Activated CD8-positive, alpha-beta T cell treated with anti-CD3 and anti-CD28 coated beads for 36 hours (primary cell): ENCODE measurements at regions of chr17 and their contacts with region 1.

Region 1: DNA sequence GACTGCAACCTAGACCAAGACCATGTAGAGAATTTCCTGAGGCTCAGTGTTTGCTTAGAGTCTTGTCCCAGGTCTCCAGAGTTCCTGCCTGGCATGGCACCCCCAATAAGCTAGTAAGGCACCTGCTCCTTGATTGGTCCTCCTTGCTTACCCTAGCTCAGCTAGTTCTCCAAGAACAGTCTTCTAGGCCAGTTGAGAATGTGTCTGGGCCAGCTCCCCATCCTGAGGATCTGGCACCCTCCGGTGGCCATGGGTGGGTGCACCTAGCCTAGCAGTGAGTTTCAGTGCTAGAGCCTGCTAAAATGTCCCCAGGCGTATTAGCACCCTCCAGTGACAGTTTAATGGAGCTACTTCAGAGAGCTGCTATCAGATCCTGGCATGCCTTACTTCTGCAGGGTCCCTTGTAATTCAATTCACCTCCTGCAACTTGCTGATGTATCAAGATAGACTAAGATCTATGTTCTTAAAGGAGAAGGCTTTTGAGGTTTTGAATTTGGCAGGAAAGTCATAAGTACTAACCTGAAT is 44.4 kb upstream of the MED13 start:
- DNase-seq: peak; percentile 80
- ATAC-seq: peak; percentile 100
- H3K4me3 Mint-ChIP-seq: no peak overlapping the region
- H3K27ac Mint-ChIP-seq: no peak overlapping the region
- H3K4me1 Mint-ChIP-seq: no peaks in the 10 kb centered on the region
- H3K27me3 Mint-ChIP-seq: no peaks in the 10 kb centered on the region
- CTCF ChIP-seq: peak; percentile 72

Region 2: GRCh38 chr17:61635913-61636432 is 473.5 kb before region 1 on chr17:
- CTCF ChIA-PET with region 1: interaction called, 18 read pairs
- POLR2A ChIA-PET with region 1: no interaction called
- intact Hi-C with region 1: no loop called
- DNase-seq: peak; percentile 76
- ATAC-seq: no peak
- H3K4me3 Mint-ChIP-seq: no peak overlapping the region
- H3K27ac Mint-ChIP-seq: no peak overlapping the region
- H3K4me1 Mint-ChIP-seq: no peaks in the 10 kb centered on the region
- H3K27me3 Mint-ChIP-seq: peaks cover 41% of the 10 kb centered on the region
- CTCF ChIP-seq: peak; percentile 77

Region 3: GRCh38 chr17:62052757-62053338 is 56.6 kb before region 1 on chr17:
- CTCF ChIA-PET with region 1: interaction called, 10 read pairs
- POLR2A ChIA-PET with region 1: no interaction called
- intact Hi-C with region 1: no loop called
- DNase-seq: no peak
- ATAC-seq: no peak
- H3K4me3 Mint-ChIP-seq: no peak overlapping the region
- H3K27ac Mint-ChIP-seq: peak overlapping the region; percentile 23
- H3K4me1 Mint-ChIP-seq: peaks cover 46% of the 10 kb centered on the region
- H3K27me3 Mint-ChIP-seq: no peaks in the 10 kb centered on the region
- CTCF ChIP-seq: no peak

Region 4: GRCh38 chr17:62065598-62066468 is 43.6 kb before region 1 on chr17:
- CTCF ChIA-PET with region 1: interaction called, 18 read pairs
- POLR2A ChIA-PET with region 1: no interaction called
- intact Hi-C with region 1: no loop called
- DNase-seq: peak; percentile 99
- ATAC-seq: peak; percentile 96
- H3K4me3 Mint-ChIP-seq: peak overlapping the region; percentile 93
- H3K27ac Mint-ChIP-seq: peak overlapping the region; percentile 98
- H3K4me1 Mint-ChIP-seq: peaks cover 21% of the 10 kb centered on the region
- H3K27me3 Mint-ChIP-seq: no peaks in the 10 kb centered on the region
- CTCF ChIP-seq: peak; percentile 85

Region 5: DNA sequence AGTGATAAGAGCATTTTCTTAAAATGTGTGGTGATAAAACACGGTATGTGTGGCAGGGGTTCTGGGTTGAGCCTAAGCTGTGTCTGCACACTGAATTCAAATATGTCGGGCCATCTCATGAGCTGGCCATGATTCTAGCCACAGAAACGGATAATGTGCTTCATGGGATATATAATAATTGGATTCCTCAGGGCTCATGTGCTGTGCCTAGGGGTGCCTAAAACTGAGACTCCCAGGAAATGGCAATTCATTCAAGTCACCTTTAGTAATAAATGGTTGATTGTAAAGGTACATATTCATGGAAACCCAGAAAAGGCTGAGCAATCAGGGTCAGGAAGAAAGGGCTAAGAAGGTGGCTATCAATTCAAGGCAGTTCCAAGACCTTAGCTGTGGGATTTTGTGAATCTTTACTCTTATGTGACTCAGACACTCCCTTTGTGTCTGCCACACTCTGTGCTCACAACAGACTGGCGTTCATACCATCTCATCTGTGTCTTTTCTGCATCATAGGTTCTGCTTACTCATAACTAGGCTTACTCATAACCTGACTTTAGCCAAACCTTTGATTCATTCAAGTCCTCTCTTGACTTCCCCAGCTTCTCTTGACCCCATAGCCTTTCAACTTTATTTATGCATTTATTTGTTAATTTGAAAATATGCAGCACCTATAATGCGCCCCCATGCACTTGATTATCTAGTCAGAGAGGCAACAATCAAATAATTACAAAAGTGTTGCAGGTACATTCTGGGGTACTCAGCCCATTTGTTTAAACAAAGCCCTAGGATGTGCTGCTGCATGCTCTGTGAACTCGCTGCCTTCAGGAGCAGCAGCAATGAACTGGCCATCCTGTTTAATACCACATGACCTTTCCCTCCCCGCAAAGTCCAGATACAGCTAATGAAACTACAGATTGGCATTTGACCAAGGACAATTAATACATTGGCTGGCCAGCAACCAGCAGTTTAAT is 16.0 kb before region 1 on chr17:
- CTCF ChIA-PET with region 1: interaction called, 16 read pairs
- POLR2A ChIA-PET with region 1: no interaction called
- intact Hi-C with region 1: no loop called
- DNase-seq: peak; percentile 30
- ATAC-seq: peak; percentile 97
- H3K4me3 Mint-ChIP-seq: no peak overlapping the region
- H3K27ac Mint-ChIP-seq: no peak overlapping the region
- H3K4me1 Mint-ChIP-seq: peaks cover 14% of the 10 kb centered on the region
- H3K27me3 Mint-ChIP-seq: no peaks in the 10 kb centered on the region
- CTCF ChIP-seq: no peak

Region 6: GRCh38 chr17:62121025-62121730 is 11.7 kb after region 1 on chr17:
- CTCF ChIA-PET with region 1: interaction called, 10 read pairs
- POLR2A ChIA-PET with region 1: interaction called, 3 read pairs
- intact Hi-C with region 1: no loop called
- DNase-seq: no peak
- ATAC-seq: no peak
- H3K4me3 Mint-ChIP-seq: no peak overlapping the region
- H3K27ac Mint-ChIP-seq: no peak overlapping the region
- H3K4me1 Mint-ChIP-seq: peaks cover 7% of the 10 kb centered on the region
- H3K27me3 Mint-ChIP-seq: peaks cover 13% of the 10 kb centered on the region
- CTCF ChIP-seq: no peak